T-cell (primary cell): ENCODE measurements at regions of chr6 and their contacts with region 1.

Region 1: GRCh38 chr6:14066782-14067406 is 50.7 kb upstream of the CD83 start:
- DNase-seq: peak in 6 of 35 experiments; percentile 3 to 75 (median 12)
- ATAC-seq: peak; percentile 73 to 82 (median 74)
- H3K4me3 ChIP-seq: no peak overlapping the region
- H3K4me3 Mint-ChIP-seq: no peak overlapping the region
- H3K27ac ChIP-seq: no peak overlapping the region
- H3K27ac Mint-ChIP-seq: peak overlapping the region in 1 of 2 donors; percentile 1
- H3K4me1 ChIP-seq: no peaks in the 10 kb centered on the region
- H3K4me1 Mint-ChIP-seq: peaks cover 2 to 5% (median 5%) of the 10 kb centered on the region in 3 donors
- H3K27me3 ChIP-seq: peaks cover 0 to 4% of the 10 kb centered on the region in 2 experiments
- H3K27me3 Mint-ChIP-seq: peaks cover 10 to 11% of the 10 kb centered on the region in 2 donors

Region 2: GRCh38 chr6:13795041-13795750 is 271.7 kb before region 1 on chr6:
- CTCF ChIA-PET with region 1: interaction called, 7 to 18 read pairs
- POLR2A ChIA-PET with region 1: interaction called, 4 to 9 read pairs
- DNase-seq: peak; percentile 56 to 89 (median 77)
- ATAC-seq: peak; percentile 93 to 98 (median 96)
- H3K4me3 ChIP-seq: no peak overlapping the region
- H3K4me3 Mint-ChIP-seq: no peak overlapping the region
- H3K27ac ChIP-seq: no peak overlapping the region
- H3K27ac Mint-ChIP-seq: peak overlapping the region in 1 of 2 donors; percentile 12
- H3K4me1 ChIP-seq: no peaks in the 10 kb centered on the region
- H3K4me1 Mint-ChIP-seq: peaks cover 2 to 8% (median 7%) of the 10 kb centered on the region in 3 donors
- H3K27me3 ChIP-seq: no peaks in the 10 kb centered on the region
- H3K27me3 Mint-ChIP-seq: no peaks in the 10 kb centered on the region

Region 3: DNA sequence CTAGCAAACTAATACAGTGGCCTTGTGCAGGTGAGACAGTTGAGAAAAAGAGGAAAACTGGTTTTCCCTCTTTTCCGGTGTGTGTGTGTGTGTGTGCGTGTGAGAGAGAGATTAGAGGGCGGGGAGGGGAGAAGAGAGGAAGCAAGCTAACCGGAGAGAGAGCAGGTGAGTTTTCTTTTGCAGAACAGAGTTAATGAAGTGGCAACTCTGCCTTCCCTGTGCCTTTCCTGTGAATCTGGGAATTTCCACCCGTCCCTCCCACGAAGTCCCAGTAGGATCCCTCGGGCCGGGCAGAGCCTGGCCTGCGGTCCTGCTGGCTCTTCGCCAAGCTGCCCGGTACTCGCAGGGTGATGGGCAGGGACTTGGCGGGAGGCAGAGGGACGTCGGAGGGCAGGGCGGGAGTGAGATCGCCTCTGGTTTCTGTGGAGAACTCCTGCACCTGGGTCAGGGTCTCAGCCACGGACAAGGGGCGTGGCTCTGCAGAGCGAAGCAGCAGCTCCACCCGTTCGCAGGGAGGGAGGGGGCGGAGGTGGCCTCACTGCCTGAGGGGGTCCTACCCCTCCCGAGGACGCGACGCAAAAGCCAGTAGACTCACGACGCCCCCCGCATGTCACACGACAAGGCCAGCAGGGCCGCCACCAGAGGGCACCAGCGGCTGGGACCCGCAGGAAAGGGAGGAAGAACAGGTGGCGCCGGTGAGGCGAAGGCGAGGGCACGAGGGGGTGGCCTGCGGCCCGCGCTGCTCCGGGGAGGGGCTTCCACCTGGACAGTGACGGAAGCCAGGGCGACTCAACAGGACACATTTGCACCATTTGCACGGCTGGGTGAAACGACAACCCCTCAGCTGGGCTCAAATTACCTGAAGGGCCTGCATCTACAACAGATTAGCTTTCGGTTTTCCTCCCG is 193.4 kb before region 1 on chr6:
- CTCF ChIA-PET with region 1: interaction called, 5 to 11 read pairs
- POLR2A ChIA-PET with region 1: no interaction called
- DNase-seq: peak; percentile 13 to 78 (median 61)
- ATAC-seq: peak; percentile 86 to 95 (median 92)
- H3K4me3 ChIP-seq: peak overlapping the region; percentile 51 to 68
- H3K4me3 Mint-ChIP-seq: peak overlapping the region; percentile 77 to 87 (median 83)
- H3K27ac ChIP-seq: no peak overlapping the region
- H3K27ac Mint-ChIP-seq: peak overlapping the region in 1 of 2 donors; percentile 79
- H3K4me1 ChIP-seq: peaks cover 3 to 11% of the 10 kb centered on the region in 2 experiments
- H3K4me1 Mint-ChIP-seq: peaks cover 16 to 18% (median 17%) of the 10 kb centered on the region in 3 donors
- H3K27me3 ChIP-seq: peaks cover 0 to 16% of the 10 kb centered on the region in 2 experiments
- H3K27me3 Mint-ChIP-seq: peaks cover 8 to 9% of the 10 kb centered on the region in 2 donors

Region 4: GRCh38 chr6:14046476-14047068 is 20.3 kb before region 1 on chr6:
- CTCF ChIA-PET with region 1: interaction called, 4 to 12 read pairs
- POLR2A ChIA-PET with region 1: no interaction called
- DNase-seq: peak in 26 of 35 experiments; percentile 4 to 70 (median 19)
- ATAC-seq: peak; percentile 40 to 72 (median 64)
- H3K4me3 ChIP-seq: no peak overlapping the region
- H3K4me3 Mint-ChIP-seq: no peak overlapping the region
- H3K27ac ChIP-seq: no peak overlapping the region
- H3K27ac Mint-ChIP-seq: no peak overlapping the region
- H3K4me1 ChIP-seq: no peaks in the 10 kb centered on the region
- H3K4me1 Mint-ChIP-seq: no peaks in the 10 kb centered on the region
- H3K27me3 ChIP-seq: peaks cover 0 to 19% of the 10 kb centered on the region in 2 experiments
- H3K27me3 Mint-ChIP-seq: peaks cover 26 to 37% of the 10 kb centered on the region in 2 donors